Mucosa of descending colon (tissue), 3 donors: ENCODE measurements at regions of chr19 and their contacts with region 1.

Region 1: DNA sequence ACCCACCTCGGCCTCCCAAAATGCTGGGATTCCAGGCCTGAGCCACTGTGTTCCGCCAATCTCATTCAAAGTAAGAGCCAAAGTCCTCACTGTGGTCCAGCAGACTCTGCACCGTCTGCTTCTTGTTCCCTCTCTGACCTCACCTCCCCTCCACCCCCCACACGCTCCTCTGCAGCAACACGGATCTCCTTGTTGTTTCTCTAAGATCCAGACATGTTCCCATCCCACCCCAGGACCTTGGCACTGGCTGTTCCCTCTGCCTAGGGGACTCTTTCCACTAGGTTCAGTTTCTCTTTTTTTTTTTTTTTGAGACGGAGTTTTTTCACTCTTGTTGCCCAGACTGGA is 38.4 kb downstream of the LTBP4 start:
- DNase-seq: no peak
- ATAC-seq: no peak
- H3K4me3 ChIP-seq: no peak overlapping the region
- H3K4me1 ChIP-seq: peaks cover 5% of the 10 kb centered on the region
- CTCF ChIP-seq: no peak

Region 2: DNA sequence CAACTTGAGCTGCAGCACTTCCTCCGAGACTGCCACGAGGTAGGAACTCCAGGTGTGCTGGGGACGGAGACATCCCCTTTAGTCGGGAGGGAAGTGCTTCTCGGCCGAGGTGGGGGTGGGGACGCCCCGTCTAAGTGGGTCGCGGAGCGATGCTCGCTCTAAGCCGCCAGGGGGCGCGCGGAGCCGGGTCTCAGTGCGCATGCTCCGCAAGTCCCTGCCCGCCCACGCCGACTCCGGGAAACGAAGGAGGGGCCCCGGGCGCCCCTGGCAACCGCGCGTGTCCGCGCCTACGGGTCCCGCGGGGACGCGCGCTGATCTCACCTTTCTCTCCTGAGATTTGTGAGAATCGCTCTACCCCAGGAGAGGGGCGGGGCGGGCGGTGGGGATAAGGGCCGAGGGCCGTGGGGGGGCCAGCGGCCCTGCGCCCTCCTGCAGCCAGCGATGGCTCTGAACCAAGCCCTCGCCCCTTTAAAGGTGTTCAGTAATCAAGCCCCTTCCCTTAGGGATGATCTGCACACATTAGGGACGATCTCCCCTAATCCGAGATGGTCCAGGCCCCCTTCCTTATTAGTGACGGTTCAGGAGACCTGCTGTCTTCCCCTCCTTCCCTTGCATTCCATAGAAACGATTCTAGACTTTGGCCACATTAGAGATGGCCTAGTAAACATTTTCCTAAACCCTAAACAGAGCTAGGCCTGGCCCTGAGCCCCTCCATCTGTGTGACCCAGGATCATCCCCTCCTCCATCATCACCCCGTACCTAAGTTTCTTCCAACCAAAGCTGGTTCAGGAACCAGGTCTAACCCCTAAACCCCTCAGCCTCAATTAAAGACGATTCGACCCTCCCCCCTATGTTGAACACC is 110.3 kb before region 1 on chr19:
- intact Hi-C with region 1: loop called in 1 of 2 experiments (anchors 5 kb)
- DNase-seq: peak; percentile 84 to 91 (median 88)
- ATAC-seq: peak; percentile 98
- H3K4me3 ChIP-seq: no peak overlapping the region
- H3K4me1 ChIP-seq: peaks cover 8% of the 10 kb centered on the region
- CTCF ChIP-seq: peak; percentile 89